ENCODE measurements at regions of chr11 and their contacts with region 1.

Region 1: GRCh38 chr11:58579192-58580129 is 598 bp downstream of the ZFP91 start:
- DNase-seq: peak; percentile 90 to 91
- ATAC-seq: peak; percentile 54 to 58
- H3K4me3 ChIP-seq: peak overlapping the region; percentile 85 to 95 (median 94)
- H3K27ac ChIP-seq: peak overlapping the region; percentile 98 to 100 (median 100)
- H3K4me1 ChIP-seq: peaks cover 72 to 73% of the 10 kb centered on the region in 2 donors
- H3K27me3 ChIP-seq: no peaks in the 10 kb centered on the region
- CTCF ChIP-seq: peak; percentile 72 to 93 (median 88)
- POLR2A ChIP-seq: peak; percentile 79 to 80

Region 2: DNA sequence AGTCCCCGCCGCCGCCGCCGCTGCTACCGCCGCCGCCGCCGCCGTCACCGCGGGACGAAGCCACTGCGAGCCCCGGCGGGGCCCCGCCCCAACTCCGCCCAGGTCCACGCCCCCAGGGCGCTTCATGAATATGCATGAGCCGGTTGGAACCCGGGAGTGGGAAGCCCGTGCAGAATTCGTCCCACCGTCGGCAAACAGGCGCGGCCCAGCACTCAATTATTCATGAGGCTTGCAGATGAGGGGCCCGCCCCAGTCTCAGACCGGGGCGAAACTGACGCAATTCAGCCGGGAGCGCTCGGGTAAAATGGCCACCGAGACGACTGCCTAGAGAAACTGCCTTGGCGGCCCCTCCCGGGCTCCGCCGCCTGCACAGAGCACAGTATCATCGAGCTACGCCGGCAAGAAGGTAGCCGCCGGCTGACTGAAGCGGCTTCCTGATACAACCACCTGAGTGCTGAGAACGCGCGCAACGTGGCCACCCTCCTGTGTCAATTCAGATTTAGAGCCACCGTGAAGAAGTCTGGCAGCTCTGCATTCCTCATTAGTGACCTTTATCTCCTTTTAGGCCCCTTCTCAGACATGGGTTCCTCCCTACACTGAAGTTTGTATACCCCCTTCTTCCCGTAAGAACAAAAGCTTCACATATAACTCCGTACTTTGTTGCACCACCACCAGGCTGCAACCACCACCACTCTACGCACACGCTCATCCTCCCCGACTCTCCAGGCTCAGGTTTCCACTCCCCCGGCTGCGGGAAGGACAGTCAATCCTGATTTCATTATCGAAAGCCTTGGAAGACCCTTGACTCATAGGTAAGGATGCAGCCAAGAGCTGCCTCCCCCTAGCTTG is 1254.4 kb before region 1 on chr11 and contains the start of gene TNKS1BP1:
- in situ Hi-C with region 1: no loop called
- intact Hi-C with region 1: loop called (anchors 2 kb)
- DNase-seq: peak; percentile 99
- ATAC-seq: peak; percentile 74 to 77
- H3K4me3 ChIP-seq: peak within 1 kb of the TSS; percentile 82 to 95 (median 90)
- H3K27ac ChIP-seq: peak within 1 kb of the TSS; percentile 95 to 99 (median 97)
- H3K4me1 ChIP-seq: peaks cover 40 to 58% of the 10 kb centered on the region in 2 donors
- H3K27me3 ChIP-seq: no peaks in the 10 kb centered on the region
- CTCF ChIP-seq: no peak
- POLR2A ChIP-seq: peak; percentile 90 to 95
- total RNA-seq, gene TNKS1BP1: 98.5 to 165 (median 125) TPM

Region 3: DNA sequence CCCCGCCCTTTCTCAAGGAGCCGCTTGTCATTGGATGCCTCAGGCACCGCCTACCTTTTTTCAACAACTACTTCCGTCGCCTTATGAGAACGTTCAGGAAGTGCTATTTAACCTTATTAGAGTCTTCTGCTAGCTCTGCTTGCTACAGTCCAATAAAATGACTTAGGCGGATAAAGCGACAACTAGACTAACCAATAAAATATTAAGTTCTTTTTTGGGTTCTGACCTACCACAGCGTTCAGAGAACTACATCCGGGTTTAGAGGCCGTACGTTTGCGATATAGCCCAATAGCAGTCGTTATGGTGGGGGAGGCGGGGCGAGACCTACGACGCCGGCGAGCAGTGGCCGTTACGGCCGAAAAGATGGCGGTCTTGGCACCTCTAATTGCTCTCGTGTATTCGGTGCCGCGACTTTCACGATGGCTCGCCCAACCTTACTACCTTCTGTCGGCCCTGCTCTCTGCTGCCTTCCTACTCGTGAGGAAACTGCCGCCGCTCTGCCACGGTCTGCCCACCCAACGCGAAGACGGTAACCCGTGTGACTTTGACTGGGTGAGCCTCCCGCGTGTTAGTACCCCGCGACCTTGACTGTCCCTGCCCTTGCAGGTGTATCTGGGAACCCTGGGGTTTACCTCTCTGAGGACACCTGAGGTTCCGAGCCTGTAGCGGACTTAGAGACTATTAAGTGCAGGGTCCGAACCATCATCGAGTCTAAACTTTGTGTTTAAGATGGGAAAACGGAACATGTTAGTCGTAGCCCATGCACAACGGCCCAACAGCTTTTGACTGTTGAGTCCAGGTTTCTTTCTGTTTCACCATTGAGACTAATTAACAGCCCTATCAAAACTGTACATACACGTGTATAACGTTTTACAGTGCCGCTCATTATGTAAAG is 867.0 kb before region 1 on chr11 and contains the start of gene TMX2:
- in situ Hi-C with region 1: loop called in 1 of 4 experiments (anchors 25 kb)
- intact Hi-C with region 1: loop called (anchors 5 kb)
- DNase-seq: peak; percentile 90 to 95
- ATAC-seq: peak; percentile 98
- H3K4me3 ChIP-seq: peak within 1 kb of the TSS; percentile 82 to 99 (median 92)
- H3K27ac ChIP-seq: peak within 1 kb of the TSS; percentile 87 to 91 (median 89)
- H3K4me1 ChIP-seq: peaks cover 33 to 34% of the 10 kb centered on the region in 2 donors
- H3K27me3 ChIP-seq: no peaks in the 10 kb centered on the region
- CTCF ChIP-seq: peak in 1 of 5 experiments; percentile 3
- POLR2A ChIP-seq: peak; percentile 49 to 59
- total RNA-seq, gene TMX2: 29.1 to 54.9 (median 40.5) TPM

Region 4: DNA sequence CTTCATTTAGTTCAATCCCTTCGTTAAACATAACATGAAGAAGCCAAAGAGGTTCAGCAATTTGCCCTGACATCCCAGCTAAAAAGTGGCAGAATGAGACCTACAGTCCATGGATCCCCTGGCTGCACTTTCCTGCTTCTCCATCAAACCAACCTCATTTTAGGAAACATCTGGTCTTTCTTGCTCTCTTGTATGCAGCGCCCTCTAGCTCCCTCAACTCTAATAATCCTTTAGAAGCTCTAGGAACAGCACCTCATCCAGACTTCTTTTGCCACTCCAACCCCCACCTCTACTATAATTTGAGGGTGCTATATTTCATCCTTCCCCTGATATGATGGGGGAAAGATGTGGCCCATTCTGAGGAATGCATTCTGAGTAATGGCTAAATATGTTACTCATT is 50.4 kb after region 1 on chr11:
- in situ Hi-C with region 1: loop called in 2 of 4 experiments (anchors 5 to 10 kb)
- intact Hi-C with region 1: loop called (anchors 2 kb)
- DNase-seq: no peak
- ATAC-seq: peak in 1 of 2 donors; percentile 37
- H3K4me3 ChIP-seq: no peak overlapping the region
- H3K27ac ChIP-seq: no peak overlapping the region
- H3K4me1 ChIP-seq: peaks cover 30 to 42% of the 10 kb centered on the region in 2 donors
- H3K27me3 ChIP-seq: no peaks in the 10 kb centered on the region
- CTCF ChIP-seq: peak in 4 of 5 experiments; percentile 25 to 49 (median 34)
- POLR2A ChIP-seq: no peak

Region 5: DNA sequence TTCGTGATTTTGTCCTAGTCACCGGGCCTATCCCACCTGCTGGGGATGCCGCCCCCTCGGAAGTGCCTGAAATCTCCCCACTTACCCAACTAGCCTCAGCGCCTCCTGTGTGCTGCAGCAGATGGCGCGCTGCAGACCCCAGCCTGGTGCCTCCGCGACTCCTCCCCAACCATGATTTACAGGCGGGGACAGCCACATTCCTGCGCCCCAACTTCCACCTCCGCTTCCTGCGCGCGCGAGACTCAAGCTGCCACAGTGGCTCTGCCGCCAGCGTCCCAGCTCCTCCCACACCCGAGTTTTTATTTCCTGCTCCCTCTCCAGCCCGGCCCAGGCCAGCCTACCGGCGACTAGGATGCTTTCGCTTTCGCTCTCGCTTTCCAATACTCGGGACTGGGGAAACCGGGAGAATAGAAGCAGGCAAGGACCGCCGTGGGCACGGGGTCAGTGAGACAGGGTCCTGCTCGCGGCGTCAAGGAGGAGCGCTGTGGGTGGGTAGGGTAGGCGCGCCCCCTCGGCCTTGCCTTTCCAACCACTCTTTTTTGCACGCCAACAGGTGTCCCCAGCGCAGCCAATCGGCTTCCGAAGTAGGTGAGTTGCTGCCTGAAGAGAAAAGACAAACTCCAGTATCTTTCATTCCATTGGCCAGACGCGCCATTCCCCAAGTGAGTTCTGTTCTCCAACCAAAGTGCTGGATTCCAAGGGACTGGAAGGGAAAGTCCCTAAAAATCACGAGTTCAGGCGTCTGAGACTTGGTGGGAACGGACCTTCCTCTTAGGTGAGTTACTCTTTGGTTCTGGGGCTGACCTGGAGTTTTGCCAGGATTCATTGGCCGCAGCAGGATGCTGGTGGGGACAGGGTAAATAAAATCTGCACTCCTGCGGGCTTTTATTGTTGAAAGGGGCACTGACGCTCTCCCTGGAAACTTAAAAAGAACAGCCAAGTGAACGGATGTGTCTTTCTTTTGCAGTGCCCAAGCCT is 563.4 kb after region 1 on chr11 and contains the start of gene FAM111A:
- in situ Hi-C with region 1: loop called in 1 of 4 experiments (anchors 25 kb)
- intact Hi-C with region 1: loop called (anchors 5 kb)
- DNase-seq: peak; percentile 64 to 74
- ATAC-seq: peak; percentile 85 to 88
- H3K4me3 ChIP-seq: peak within 1 kb of the TSS; percentile 68 to 90 (median 80)
- H3K27ac ChIP-seq: peak within 1 kb of the TSS; percentile 70 to 82 (median 80)
- H3K4me1 ChIP-seq: peaks cover 7 to 12% of the 10 kb centered on the region in 2 donors
- H3K27me3 ChIP-seq: no peaks in the 10 kb centered on the region
- CTCF ChIP-seq: no peak
- POLR2A ChIP-seq: peak in 1 of 2 donors; percentile 41
- total RNA-seq, gene FAM111A: 2.0 to 7.0 (median 3.7) TPM

Region 6: GRCh38 chr11:59615637-59616395 is 1036.4 kb after region 1 on chr11 and contains the start of gene OSBP:
- in situ Hi-C with region 1: no loop called
- intact Hi-C with region 1: loop called (anchors 5 kb)
- DNase-seq: peak; percentile 100
- ATAC-seq: peak; percentile 85 to 86
- H3K4me3 ChIP-seq: peak within 1 kb of the TSS; percentile 72 to 88 (median 82)
- H3K27ac ChIP-seq: peak within 1 kb of the TSS; percentile 90 to 97 (median 94)
- H3K4me1 ChIP-seq: peaks cover 42 to 44% of the 10 kb centered on the region in 2 donors
- H3K27me3 ChIP-seq: no peaks in the 10 kb centered on the region
- CTCF ChIP-seq: peak in 2 of 5 experiments; percentile 7 to 38
- POLR2A ChIP-seq: peak; percentile 91 to 93
- total RNA-seq, gene OSBP: 27.4 to 45.2 (median 34.9) TPM